OCI-LY7 (cell line): ENCODE measurements at regions of chr16 and their contacts with region 1.

Region 1: GRCh38 chr16:29973384-29974246 is at the start of gene TAOK2:
- DNase-seq: peak; percentile 99
- H3K4me3 ChIP-seq: peak within 1 kb of the TSS; percentile 99
- H3K27ac ChIP-seq: peak within 1 kb of the TSS; percentile 69
- H3K4me1 ChIP-seq: peaks cover 34% of the 10 kb centered on the region
- CTCF ChIP-seq: no peak
- total RNA-seq, gene TAOK2: 31.7 and 33.3 TPM in 2 replicates

Region 2: DNA sequence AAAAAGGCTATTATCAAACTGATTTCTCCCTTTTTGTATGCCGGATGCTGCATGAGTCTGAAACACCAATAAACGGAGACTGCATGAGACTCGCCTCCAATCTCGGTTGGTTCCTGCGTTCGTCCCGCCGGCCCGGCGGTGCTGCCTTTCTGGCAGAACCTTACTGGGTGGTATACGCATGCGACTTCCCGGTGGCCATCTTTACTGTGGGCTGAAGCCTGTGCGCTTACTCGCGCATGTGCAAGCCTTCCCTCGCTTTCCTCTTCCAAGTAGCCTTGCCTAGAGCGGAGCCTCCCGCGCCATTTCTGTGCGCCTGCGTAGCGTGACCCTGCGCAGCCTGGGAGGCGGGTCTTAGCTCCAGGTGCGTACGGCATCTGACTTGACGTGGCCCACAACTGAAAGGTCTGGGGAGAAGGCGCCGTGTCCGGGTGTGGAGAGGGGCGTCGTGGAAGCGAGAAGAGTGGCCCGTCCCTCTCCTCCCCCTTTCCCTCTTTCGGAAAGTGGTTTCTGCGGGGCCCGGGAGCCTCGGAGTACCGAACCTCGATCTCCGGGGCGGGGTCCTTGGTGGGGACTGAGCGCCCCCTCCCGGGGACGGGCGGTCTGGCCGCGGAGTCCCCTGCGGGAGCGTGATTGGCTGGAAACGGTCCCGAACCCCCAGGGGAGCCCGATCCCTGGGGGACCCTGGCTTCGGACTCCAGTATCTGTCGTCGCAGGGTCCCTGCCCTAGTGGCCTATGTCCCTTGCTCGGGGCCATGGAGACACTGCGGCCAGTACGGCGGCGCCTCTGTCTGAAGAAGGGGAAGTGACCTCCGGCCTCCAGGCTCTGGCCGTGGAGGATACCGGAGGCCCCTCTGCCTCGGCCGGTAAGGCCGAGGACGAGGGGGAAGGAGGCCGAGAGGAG is 157.6 kb before region 1 on chr16 and contains the start of gene PAGR1:
- CTCF ChIA-PET with region 1: no interaction called
- POLR2A ChIA-PET with region 1: no interaction called
- intact Hi-C with region 1: loop called (anchors 5 kb)
- DNase-seq: peak; percentile 100
- H3K4me3 ChIP-seq: peak within 1 kb of the TSS; percentile 89
- H3K27ac ChIP-seq: peak within 1 kb of the TSS; percentile 72
- H3K4me1 ChIP-seq: peaks cover 56% of the 10 kb centered on the region
- CTCF ChIP-seq: peak; percentile 87
- total RNA-seq, gene PAGR1: 59.4 and 62.7 TPM in 2 replicates

Region 3: DNA sequence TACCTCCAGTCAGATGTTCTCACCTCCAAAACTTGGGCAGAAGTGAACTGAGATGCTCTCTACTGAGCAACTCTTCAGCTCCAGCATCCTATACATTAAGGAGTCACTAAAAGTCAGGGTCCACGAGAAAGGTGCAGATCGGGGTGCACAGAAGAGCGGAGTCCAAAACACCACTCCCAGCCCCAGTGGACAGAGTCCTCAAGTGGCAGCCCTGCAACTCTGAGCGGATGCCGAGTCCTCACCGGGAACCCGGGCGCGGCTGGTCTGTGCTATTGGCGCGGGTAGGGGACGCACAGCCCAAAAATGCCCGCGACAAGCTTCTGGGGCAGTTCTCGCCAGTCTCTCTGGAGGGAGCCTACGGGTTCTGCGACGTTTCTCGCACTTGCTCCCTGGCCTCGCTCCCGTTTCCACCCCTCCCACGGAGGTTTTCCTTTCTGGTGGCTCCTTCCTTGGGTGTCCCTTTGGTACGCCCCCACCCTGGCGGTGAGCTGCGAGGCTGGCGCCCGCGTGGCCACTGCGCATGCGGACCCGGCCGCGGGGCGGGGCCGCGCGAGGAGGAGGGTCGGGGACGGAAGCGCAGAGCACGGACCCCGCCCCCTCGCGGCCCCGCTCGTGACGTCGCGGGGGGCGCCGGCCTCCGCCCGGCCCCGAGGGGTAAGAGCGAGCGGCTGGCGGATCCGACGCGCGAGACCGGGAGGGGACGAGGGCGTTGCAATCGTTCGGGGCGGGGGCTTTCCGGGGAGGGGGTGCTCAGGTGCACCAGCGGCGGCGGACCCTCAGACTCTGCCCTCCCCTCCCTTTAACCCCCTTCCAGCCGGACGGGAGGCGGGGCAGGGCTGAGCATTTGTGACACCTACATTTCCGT is 11.9 kb before region 1 on chr16 and contains the start of gene TMEM219:
- CTCF ChIA-PET with region 1: interaction called, 6 read pairs
- POLR2A ChIA-PET with region 1: interaction called, 56 read pairs
- intact Hi-C with region 1: no loop called
- DNase-seq: peak; percentile 94
- H3K4me3 ChIP-seq: peak within 1 kb of the TSS; percentile 75
- H3K27ac ChIP-seq: peak within 1 kb of the TSS; percentile 56
- H3K4me1 ChIP-seq: peaks cover 17% of the 10 kb centered on the region
- CTCF ChIP-seq: 0 out of 2 replicates have a peak, but pooled peaks have one; percentile 25
- total RNA-seq, gene TMEM219: 75.7 and 94.1 TPM in 2 replicates

Region 4: DNA sequence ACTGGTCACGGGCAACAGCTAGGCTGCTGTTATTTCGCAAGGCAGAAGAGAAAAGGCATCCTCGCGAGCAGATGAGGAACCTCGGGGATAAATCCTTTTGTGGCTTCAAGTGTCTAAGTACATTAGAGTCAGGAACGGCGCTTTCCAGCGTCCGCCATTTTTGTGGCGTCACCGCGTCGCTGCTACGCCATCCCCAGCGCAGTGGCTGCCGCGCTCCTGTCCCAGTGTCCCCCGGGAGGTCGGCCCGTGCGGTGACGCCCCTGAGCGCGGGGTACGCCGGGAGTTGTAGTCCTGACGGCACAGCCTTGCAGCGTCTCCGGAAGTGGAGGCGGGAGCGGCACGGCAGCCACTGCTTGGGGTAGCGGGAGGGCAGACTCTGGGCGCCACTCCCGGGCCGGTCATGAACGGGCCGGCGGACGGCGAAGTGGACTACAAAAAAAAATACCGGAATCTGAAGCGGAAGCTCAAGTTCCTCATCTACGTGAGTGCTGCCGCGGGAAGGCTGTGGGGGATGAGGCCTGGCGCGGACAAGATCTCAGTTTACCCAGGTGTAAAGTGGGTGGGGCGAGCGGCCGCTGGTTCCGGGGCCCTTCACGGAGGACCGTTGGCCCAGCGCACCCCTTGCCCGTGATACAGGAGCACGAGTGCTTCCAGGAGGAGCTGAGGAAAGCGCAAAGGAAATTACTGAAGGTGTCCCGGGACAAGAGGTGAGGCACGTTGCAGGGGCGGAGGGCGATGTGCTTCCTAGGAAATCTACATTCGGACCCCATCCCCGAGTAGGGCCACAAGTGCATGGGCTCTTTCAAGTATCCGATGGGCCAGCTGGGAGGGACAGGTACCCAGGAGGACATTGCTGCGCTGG is 22.5 kb after region 1 on chr16 and contains the start of gene INO80E:
- CTCF ChIA-PET with region 1: no interaction called
- POLR2A ChIA-PET with region 1: interaction called, 5 read pairs
- intact Hi-C with region 1: loop called (anchors 1 kb)
- DNase-seq: peak; percentile 99
- H3K4me3 ChIP-seq: peak within 1 kb of the TSS; percentile 85
- H3K27ac ChIP-seq: peak within 1 kb of the TSS; percentile 90
- H3K4me1 ChIP-seq: peaks cover 27% of the 10 kb centered on the region
- CTCF ChIP-seq: no peak
- total RNA-seq, gene INO80E: 88.0 and 94.7 TPM in 2 replicates